Activated T-helper 1 cell treated with anti-CD3 and anti-CD28 coated beads, Interleukin-12 subunit alpha, Interleukin-12 subunit beta, Interleukin-2, Interleukin-4 antibody, amounts not matched to agents 30 ng/mL and 10 ng/mL and 1 ng/mL, durations not matched to agents 14 hours and 24 hours and 36 hours (primary cell): ENCODE measurements at regions of chr18 and their contacts with region 1.

Region 1: DNA sequence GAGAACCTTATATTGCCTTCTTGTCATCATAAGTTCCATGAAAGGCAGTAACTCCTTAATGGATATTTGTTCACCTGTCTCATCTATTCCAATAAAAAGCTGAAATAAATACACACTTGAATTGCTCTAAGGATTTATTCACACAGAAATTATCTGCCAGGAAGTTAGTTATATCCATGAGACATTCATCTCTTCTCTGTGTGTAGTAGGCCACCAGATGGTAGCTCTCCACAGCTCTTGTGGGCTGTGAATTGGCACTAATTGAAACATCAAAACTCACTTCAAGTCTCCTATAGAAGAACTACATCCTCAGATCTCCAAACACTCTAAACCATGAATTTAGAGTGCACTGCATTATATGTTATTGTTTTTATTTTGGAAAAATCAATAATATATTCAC is 189.6 kb downstream of the DSC3 start:
- DNase-seq: no peak
- H3K4me3 Mint-ChIP-seq: no peak overlapping the region
- H3K27ac Mint-ChIP-seq: no peak overlapping the region
- H3K4me1 Mint-ChIP-seq: no peaks in the 10 kb centered on the region
- H3K27me3 Mint-ChIP-seq: no peaks in the 10 kb centered on the region

Region 2: GRCh38 chr18:30457156-30457555 is 395.8 kb before region 1 on chr18:
- intact Hi-C with region 1: loop called (anchors 10 kb)
- DNase-seq: no peak
- H3K4me3 Mint-ChIP-seq: no peak overlapping the region
- H3K27ac Mint-ChIP-seq: no peak overlapping the region
- H3K4me1 Mint-ChIP-seq: no peaks in the 10 kb centered on the region
- H3K27me3 Mint-ChIP-seq: no peaks in the 10 kb centered on the region

Region 3: DNA sequence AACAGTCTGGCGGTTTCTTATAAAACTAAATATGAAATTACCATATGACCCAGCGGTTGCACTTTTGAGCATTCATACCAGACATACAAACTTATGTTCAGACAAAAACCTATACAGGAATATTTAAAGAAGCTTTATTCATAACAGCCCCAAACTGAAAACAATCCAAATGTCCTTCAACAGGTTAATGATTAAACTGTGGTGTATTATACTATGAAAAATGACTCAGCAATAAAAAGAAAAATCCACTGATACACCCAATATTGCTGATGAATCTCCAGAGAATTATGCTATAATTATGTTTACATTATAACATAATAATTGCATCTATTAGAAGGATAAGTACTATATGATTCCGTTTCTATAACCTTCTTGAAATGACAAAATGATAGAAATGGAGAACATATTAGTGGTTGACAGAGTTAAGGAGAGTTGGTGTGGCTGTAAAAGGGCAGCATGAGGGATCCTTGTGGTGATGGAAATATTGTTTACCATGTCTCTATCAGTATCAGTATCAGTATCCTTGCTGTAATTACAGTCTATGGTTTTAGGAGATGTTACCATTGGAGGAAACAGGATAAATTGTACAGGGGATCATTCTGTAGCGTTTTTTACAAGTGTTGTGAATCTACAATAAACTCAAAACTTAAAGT is 62.5 kb after region 1 on chr18:
- intact Hi-C with region 1: loop called (anchors 10 kb)
- DNase-seq: no peak
- H3K4me3 Mint-ChIP-seq: no peak overlapping the region
- H3K27ac Mint-ChIP-seq: no peak overlapping the region
- H3K4me1 Mint-ChIP-seq: no peaks in the 10 kb centered on the region
- H3K27me3 Mint-ChIP-seq: no peaks in the 10 kb centered on the region

Region 4: GRCh38 chr18:30957066-30957465 is 104.1 kb after region 1 on chr18:
- intact Hi-C with region 1: no loop called
- DNase-seq: no peak
- H3K4me3 Mint-ChIP-seq: no peak overlapping the region
- H3K27ac Mint-ChIP-seq: no peak overlapping the region
- H3K4me1 Mint-ChIP-seq: no peaks in the 10 kb centered on the region
- H3K27me3 Mint-ChIP-seq: no peaks in the 10 kb centered on the region